ENCODE measurements at regions of chrX and their contacts with region 1.

Region 1: DNA sequence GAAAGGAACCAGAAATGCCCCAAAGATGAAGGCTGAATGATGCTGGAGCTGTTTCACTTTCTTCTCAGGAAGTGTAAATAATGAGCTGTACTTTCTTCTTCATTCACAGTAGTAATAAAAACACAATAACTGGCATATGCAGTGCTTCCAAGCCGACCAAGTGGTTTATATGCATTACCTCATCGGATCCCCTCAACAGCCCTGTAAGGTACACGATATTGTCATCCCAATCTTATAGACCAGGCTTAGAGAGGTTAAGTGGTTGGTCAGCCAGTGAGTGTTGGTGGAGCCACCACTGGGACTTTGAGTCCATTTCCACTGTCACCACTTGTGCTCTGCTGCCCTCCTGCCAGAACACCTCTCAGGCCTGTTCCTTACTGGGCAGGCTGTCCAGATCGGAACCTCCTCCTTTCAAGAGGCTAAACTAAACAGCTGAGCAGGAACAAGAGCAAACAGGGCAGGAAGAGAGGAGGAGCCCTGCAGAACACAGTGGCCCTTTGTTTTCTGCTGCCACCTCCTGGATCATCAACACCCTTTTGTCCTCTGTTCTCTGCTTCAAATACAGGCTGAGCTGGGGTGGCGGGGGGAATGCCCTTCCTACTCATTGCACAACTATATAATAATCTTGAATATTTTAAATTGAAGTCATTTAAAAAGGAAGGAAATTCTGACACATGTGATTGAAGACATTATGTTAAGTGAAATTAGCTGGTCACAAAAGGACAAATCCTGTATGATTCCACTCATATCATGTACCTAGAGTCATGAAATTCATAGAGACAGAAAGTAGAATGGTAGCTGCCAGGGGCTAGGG is 112.5 kb upstream of the ATP6AP2 start:
- DNase-seq: peak; percentile 16 to 87 (median 74)
- H3K4me3 ChIP-seq: peak overlapping the region in 2 of 59 donors; percentile 2 to 10
- H3K27ac ChIP-seq: peak overlapping the region in 43 of 59 donors; percentile 0 to 85 (median 59)
- H3K27me3 ChIP-seq: peaks cover 0 to 45% (median 8%) of the 10 kb centered on the region in 45 donors
- CTCF ChIP-seq: peak in 52 of 56 donors; percentile 22 to 74 (median 46)

Region 2: GRCh38 chrX:40108959-40109287 is 359.3 kb before region 1 on chrX:
- intact Hi-C with region 1: loop called in 1 of 2 experiments (anchors 5 kb)
- DNase-seq: peak in 7 of 10 donors; percentile 54 to 81 (median 59)
- H3K4me3 ChIP-seq: peak overlapping the region; percentile 12 to 75 (median 58)
- H3K27ac ChIP-seq: peak overlapping the region in 56 of 59 donors; percentile 38 to 92 (median 82)
- H3K27me3 ChIP-seq: peaks cover 0 to 94% (median 49%) of the 10 kb centered on the region in 45 donors
- CTCF ChIP-seq: peak in 1 of 56 donors; percentile 18

Region 3: DNA sequence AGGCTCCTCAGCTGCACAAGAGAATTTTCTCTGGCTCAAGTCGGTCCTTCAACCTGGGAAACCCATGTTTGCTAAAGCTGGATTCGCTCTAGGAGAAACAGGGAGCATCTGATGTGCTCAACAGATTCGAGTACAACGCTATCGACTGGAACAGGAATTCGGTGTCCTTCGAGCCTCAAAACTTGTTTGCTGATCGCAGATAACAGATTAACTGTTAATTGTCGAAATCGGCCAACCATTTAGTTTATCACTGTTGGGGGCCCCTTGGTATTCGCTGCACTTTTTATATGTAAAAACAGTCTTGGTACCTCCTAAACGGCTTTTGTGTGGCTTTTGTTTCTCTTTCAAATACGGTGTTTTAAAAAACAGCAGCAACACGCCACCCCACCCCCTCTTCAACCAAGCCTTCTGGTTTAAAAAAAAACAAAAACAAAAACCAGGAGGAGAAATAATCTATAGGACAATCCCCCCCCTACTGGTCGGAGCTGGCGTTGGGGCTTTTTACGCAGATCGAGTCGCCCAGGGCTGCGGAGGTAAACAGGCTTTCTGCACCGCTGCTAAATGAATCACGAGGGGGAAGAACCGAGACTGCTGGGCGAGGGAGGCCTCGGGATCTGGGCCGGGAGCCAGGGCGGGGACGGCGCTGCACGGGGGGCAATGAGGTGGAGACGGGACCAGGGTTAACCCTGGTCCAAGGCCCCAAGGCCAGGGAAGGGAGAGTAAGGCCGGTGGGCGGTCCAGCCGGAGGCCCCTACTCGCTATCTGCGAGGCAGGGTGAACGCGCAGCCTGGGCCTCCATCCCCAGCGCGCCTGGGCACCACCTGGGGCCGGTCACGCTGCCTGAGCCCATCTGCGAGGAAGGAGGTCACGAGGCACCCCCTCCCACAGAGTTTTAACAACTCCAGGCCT is 298.8 kb before region 1 on chrX:
- intact Hi-C with region 1: loop called in 1 of 2 experiments (anchors 5 kb)
- DNase-seq: peak in 2 of 10 donors; percentile 29 to 44
- H3K4me3 ChIP-seq: no peak overlapping the region
- H3K27ac ChIP-seq: peak overlapping the region in 1 of 59 donors; percentile 14
- H3K27me3 ChIP-seq: peaks cover 0 to 100% (median 74%) of the 10 kb centered on the region in 45 donors
- CTCF ChIP-seq: peak in 16 of 56 donors; percentile 5 to 39 (median 19)

Region 4: DNA sequence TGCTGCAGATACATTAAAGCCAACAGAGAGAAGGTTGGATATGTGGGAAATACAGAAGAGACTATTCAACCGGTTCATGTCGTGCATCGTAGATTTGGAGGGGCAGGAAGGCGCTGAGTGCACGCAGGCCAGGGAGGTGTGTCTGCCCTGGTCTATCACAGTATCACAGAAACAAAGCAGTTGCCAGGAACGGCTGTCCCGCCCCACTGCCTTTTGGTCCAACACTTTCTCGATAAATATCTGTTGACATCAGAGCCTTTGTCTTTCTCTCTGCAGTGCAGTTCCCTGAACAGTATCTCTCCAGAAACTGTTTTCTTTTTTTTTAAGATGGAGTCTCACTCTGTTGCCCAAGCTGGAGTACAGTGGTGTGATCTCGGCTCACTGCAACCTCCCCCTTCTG is 219.4 kb before region 1 on chrX:
- intact Hi-C with region 1: no loop called
- DNase-seq: no peak
- H3K4me3 ChIP-seq: no peak overlapping the region
- H3K27ac ChIP-seq: no peak overlapping the region
- H3K27me3 ChIP-seq: peaks cover 0 to 71% (median 17%) of the 10 kb centered on the region in 45 donors
- CTCF ChIP-seq: no peak

Region 5: DNA sequence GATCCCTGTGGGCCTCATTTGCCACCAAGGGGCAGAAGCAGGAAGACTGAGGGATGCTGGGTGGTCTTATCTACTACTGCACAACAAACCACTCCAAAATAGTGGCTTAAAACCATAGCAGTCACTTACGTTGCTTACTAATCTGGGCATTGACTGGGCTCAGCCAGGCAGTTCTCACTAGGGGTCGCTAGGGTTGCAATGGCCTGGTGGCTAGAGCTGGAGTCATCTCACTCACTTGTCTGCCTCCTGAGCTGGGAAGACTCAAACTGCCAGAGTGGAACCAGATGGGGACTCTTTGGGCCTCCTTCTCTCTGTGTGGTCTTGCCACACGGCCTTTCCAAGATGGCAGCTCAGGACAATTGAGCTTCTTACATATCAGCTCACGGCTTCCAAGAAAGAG is 154.2 kb before region 1 on chrX:
- intact Hi-C with region 1: loop called in 1 of 2 experiments (anchors 5 kb)
- DNase-seq: peak in 1 of 10 donors; percentile 37
- H3K4me3 ChIP-seq: no peak overlapping the region
- H3K27ac ChIP-seq: no peak overlapping the region
- H3K27me3 ChIP-seq: peaks cover 0 to 86% (median 11%) of the 10 kb centered on the region in 45 donors
- CTCF ChIP-seq: peak in 39 of 56 donors; percentile 5 to 58 (median 32)

Region 6: GRCh38 chrX:40420899-40421729 is 47.1 kb before region 1 on chrX:
- intact Hi-C with region 1: loop called (anchors 2 to 5 kb)
- DNase-seq: peak; percentile 37 to 81 (median 71)
- H3K4me3 ChIP-seq: no peak overlapping the region
- H3K27ac ChIP-seq: peak overlapping the region in 53 of 59 donors; percentile 26 to 87 (median 70)
- H3K27me3 ChIP-seq: peaks cover 0 to 38% (median 4%) of the 10 kb centered on the region in 45 donors
- CTCF ChIP-seq: peak in 4 of 56 donors; percentile 9 to 30 (median 13)

Region 7: DNA sequence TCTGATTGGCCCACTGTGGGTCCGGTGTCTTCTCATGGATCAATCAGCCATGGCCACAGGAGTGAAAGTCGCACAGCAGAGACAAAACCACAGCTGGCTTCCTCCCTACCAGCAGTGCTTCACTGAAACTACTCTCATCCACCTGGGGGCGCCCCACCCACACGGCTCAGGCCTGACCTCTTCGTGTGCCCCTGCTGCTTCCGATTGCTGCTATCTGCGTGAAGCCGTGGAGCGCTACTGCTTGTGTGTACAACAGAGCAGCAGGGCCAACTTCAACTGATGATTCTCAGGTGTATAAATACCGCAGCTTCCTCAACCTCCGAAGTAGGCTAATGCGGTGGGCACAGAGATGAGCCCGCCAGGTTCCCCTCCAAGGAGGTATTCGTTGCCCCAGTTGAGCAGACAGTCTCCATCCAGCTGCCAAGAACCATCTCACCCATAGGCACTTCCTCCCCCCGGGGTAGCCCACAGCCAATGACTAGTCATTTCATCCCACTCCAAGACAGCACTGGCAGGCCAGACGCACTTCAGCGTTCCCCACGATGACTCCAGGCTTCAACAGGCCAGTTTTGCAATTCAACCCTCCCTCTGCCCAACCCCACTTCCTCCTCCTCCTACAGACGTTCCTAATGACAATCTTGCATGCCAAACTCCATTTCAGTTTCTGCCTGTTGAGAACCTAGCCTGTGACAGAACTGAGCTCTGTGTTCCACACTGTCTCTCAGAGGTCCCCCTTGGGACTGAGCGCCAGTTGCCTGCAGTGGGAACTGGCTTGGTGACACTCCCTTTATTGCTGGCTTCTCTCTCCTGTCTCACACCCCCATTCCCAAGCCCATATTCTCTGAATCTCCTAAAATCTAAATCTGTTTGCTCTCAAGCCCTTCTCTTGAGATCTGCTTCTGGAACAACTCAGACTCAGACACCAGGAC is 71.2 kb after region 1 on chrX:
- intact Hi-C with region 1: loop called in 1 of 2 experiments (anchors 10 kb)
- DNase-seq: peak in 1 of 10 donors; percentile 12
- H3K4me3 ChIP-seq: no peak overlapping the region
- H3K27ac ChIP-seq: no peak overlapping the region
- H3K27me3 ChIP-seq: peaks cover 0 to 95% (median 41%) of the 10 kb centered on the region in 45 donors
- CTCF ChIP-seq: no peak

Region 8: GRCh38 chrX:41906515-41907165 is 1438.4 kb after region 1 on chrX:
- intact Hi-C with region 1: no loop called
- DNase-seq: no peak
- H3K4me3 ChIP-seq: no peak overlapping the region
- H3K27ac ChIP-seq: no peak overlapping the region
- H3K27me3 ChIP-seq: peaks cover 0 to 47% (median 4%) of the 10 kb centered on the region in 45 donors
- CTCF ChIP-seq: no peak

Measured in dorsolateral prefrontal cortex (tissue), 120 donors.